PC-3 (cell line): ENCODE measurements at regions of chr9 and their contacts with region 1.

Region 1: DNA sequence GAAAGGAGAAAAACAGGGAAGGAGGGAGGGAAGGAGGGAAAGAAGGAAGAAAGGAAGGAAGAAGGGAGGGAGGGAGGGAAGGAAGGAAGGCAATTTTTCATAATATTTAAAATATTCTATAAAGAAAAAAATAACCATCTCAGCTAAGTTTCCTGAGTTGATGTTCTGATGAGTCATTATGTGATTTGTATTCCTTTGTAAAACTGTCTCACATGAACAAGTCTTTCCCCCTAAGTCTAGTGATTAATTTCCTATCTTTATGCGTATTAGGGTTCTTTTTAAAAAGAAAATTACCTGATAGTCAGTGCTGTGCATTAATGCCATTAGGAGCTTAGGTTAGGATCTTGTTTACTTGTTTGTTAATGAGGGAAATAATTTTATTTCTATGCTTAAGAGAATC is 94.1 kb downstream of the RASEF start:
- DNase-seq: no peak
- ATAC-seq: no peak
- H3K4me3 ChIP-seq: no peak overlapping the region
- H3K27ac ChIP-seq: no peak overlapping the region
- H3K4me1 ChIP-seq: no peaks in the 10 kb centered on the region
- H3K27me3 ChIP-seq: no peaks in the 10 kb centered on the region
- CTCF ChIP-seq: no peak

Region 2: DNA sequence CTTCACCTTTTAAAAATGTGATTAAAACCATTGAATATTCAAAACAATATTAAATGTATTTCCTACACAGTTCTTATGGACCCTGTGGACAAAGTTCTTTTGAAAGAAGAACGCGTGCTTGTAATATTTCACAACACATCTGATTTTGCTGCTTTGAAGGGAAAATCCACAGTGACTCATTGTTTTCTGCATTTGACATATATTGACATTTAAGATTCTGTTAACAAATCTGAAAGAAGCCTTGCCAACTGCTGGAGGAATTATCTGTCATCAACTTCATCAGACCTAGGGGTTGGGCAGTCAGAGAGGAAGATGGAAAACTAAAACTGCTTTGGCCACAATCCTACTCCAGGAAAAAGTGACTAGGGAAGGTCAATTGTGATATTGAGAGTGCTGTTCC is 151.1 kb after region 1 on chr9:
- CTCF ChIA-PET with region 1: interaction called, 16 read pairs
- POLR2A ChIA-PET with region 1: no interaction called
- intact Hi-C with region 1: no loop called
- DNase-seq: peak; percentile 29
- ATAC-seq: no peak
- H3K4me3 ChIP-seq: no peak overlapping the region
- H3K27ac ChIP-seq: no peak overlapping the region
- H3K4me1 ChIP-seq: no peaks in the 10 kb centered on the region
- H3K27me3 ChIP-seq: no peaks in the 10 kb centered on the region
- CTCF ChIP-seq: no peak